ENCODE measurements at regions of chr19 and their contacts with region 1.

Region 1: GRCh38 chr19:49200238-49200862 is 42.8 kb downstream of the TRPM4 start:
- DNase-seq: peak; percentile 77
- H3K4me3 ChIP-seq: no peak overlapping the region
- H3K27ac ChIP-seq: no peak overlapping the region
- H3K4me1 ChIP-seq: no peaks in the 10 kb centered on the region; a peak in 1 of 4 replicates
- H3K27me3 ChIP-seq: no peaks in the 10 kb centered on the region
- CTCF ChIP-seq: no peak
- EP300 ChIP-seq: no peak
- RAD21 ChIP-seq: no peak

Region 2: GRCh38 chr19:49073514-49074378 is 126.6 kb before region 1 on chr19:
- CTCF ChIA-PET with region 1: interaction called, 13 read pairs
- POLR2A ChIA-PET with region 1: no interaction called
- DNase-seq: peak; percentile 50
- H3K4me3 ChIP-seq: no peak overlapping the region
- H3K27ac ChIP-seq: no peak overlapping the region
- H3K4me1 ChIP-seq: no peaks in the 10 kb centered on the region; a peak in 1 of 4 replicates
- H3K27me3 ChIP-seq: peaks cover 8% of the 10 kb centered on the region; the same call in 1 of the 2 replicates
- CTCF ChIP-seq: peak; percentile 49
- EP300 ChIP-seq: no peak
- RAD21 ChIP-seq: no peak; the same call in 1 of the 2 replicates

Region 3: GRCh38 chr19:49106648-49107135 is 93.7 kb before region 1 on chr19:
- CTCF ChIA-PET with region 1: interaction called, 64 read pairs
- POLR2A ChIA-PET with region 1: no interaction called
- DNase-seq: peak; percentile 80
- H3K4me3 ChIP-seq: no peak overlapping the region; a peak in 1 of 4 replicates
- H3K27ac ChIP-seq: no peak overlapping the region
- H3K4me1 ChIP-seq: peaks cover 3 to 13% of the 10 kb centered on the region in 2 experiments; a peak in 2 of 4 replicates
- H3K27me3 ChIP-seq: no peaks in the 10 kb centered on the region
- CTCF ChIP-seq: peak; percentile 90
- EP300 ChIP-seq: no peak
- RAD21 ChIP-seq: peak; percentile 41

Region 4: GRCh38 chr19:49148784-49149651 is 51.3 kb before region 1 on chr19:
- CTCF ChIA-PET with region 1: interaction called, 17 read pairs
- POLR2A ChIA-PET with region 1: no interaction called
- DNase-seq: peak; percentile 94
- H3K4me3 ChIP-seq: peak overlapping the region; percentile 91 to 96
- H3K27ac ChIP-seq: peak overlapping the region; percentile 68 to 87; a peak in 3 of 4 replicates
- H3K4me1 ChIP-seq: peaks cover 3 to 27% of the 10 kb centered on the region in 2 experiments; a peak in 2 of 4 replicates
- H3K27me3 ChIP-seq: no peaks in the 10 kb centered on the region
- CTCF ChIP-seq: no peak
- EP300 ChIP-seq: no peak
- RAD21 ChIP-seq: no peak

Region 5: GRCh38 chr19:49182848-49183344 is 17.5 kb before region 1 on chr19:
- CTCF ChIA-PET with region 1: interaction called, 26 read pairs
- POLR2A ChIA-PET with region 1: no interaction called
- DNase-seq: no peak
- H3K4me3 ChIP-seq: no peak overlapping the region
- H3K27ac ChIP-seq: no peak overlapping the region
- H3K4me1 ChIP-seq: no peaks in the 10 kb centered on the region
- H3K27me3 ChIP-seq: no peaks in the 10 kb centered on the region
- CTCF ChIP-seq: no peak
- EP300 ChIP-seq: no peak
- RAD21 ChIP-seq: no peak

Region 6: GRCh38 chr19:49224856-49225255 is 24.5 kb after region 1 on chr19:
- CTCF ChIA-PET with region 1: interaction called, 30 read pairs
- POLR2A ChIA-PET with region 1: no interaction called
- DNase-seq: peak; percentile 66
- H3K4me3 ChIP-seq: peak overlapping the region in 1 of 2 experiments; percentile 30; a peak in 1 of 4 replicates
- H3K27ac ChIP-seq: no peak overlapping the region
- H3K4me1 ChIP-seq: no peaks in the 10 kb centered on the region; a peak in 1 of 4 replicates
- H3K27me3 ChIP-seq: peaks cover 15% of the 10 kb centered on the region; the same call in 1 of the 2 replicates
- CTCF ChIP-seq: peak; percentile 65
- EP300 ChIP-seq: no peak
- RAD21 ChIP-seq: peak; percentile 77

Measured in SK-N-SH (cell line).